Gastrocnemius medialis (tissue), 4 donors: ENCODE measurements at regions of chr18 and their contacts with region 1.

Region 1: DNA sequence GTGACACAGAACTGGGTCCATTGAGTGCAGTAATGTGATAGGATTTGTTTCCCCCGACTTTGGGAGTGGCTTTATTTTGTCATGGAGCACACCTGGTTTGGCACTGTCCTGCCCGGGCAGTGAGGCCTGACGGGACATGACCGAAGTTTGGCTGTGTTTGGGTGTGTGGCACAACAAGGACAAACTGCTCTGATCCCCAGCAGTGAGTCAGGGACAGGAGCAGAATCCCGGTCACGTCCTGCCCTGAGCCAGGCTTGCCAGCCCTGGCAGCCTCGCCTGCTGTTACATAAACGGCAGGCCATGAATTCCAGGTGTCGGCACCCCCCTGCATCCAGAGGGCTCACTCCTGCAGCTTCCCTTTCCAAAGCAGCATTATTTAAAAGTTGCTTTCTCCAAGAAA is 45.7 kb downstream of the IMPA2 start:
- DNase-seq: peak; percentile 88 to 89
- ATAC-seq: peak; percentile 97
- H3K4me3 ChIP-seq: no peak overlapping the region
- H3K27ac ChIP-seq: peak overlapping the region; percentile 83 to 90 (median 87)
- H3K4me1 ChIP-seq: peaks cover 22 to 29% of the 10 kb centered on the region in 2 donors
- H3K27me3 ChIP-seq: no peaks in the 10 kb centered on the region
- CTCF ChIP-seq: no peak
- POLR2A ChIP-seq: no peak

Region 2: DNA sequence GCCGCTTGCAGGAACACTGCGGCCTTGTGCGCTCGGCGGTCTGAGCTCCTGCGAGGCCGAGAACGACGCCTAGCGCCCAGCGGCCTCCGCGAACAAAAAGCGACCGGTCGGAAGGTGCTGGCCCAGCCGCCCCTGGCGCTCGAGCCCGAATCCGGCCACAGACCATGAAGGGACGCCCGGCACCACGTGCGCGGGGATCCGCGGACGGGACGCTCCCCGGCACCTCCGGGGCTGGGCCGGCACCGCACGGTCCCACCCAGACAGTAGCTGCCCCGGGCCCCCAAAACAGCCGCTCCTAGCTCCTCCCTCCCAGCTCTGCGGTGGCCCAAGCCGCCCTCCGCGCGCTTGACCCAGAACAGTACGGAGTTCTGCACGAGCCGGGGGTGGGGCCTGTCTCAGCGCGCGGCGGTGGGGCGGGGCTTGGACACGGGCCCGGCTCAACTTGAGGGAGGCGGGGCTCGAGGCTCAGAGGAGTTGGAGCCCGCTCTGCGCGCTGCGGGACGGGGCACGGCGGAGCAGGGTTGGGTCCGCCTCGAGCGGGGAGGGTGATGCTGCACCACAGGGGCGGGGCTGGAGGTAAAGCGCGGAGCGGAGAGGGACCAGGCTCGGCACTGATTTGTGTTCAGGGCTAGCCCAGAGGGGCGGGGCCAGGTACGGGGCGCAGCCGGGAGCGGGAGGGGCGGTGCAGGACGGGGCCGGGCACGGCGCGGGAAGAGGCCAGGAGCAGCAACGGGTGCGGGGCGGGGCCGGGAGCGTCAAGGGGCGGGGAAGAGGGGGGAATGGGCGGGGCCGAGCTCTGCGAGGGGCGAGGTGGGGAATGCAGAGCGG is 46.3 kb before region 1 on chr18:
- in situ Hi-C with region 1: no loop called
- intact Hi-C with region 1: loop called (anchors 5 kb)
- DNase-seq: peak; percentile 99
- ATAC-seq: peak; percentile 67 to 72
- H3K4me3 ChIP-seq: peak overlapping the region; percentile 71 to 94 (median 86)
- H3K27ac ChIP-seq: peak overlapping the region; percentile 97 to 100 (median 99)
- H3K4me1 ChIP-seq: peaks cover 21 to 38% of the 10 kb centered on the region in 2 donors
- H3K27me3 ChIP-seq: no peaks in the 10 kb centered on the region
- CTCF ChIP-seq: peak in 4 of 5 experiments; percentile 14 to 41 (median 21)
- POLR2A ChIP-seq: peak; percentile 98 to 99

Region 3: GRCh38 chr18:11991021-11991795 is 35.8 kb before region 1 on chr18:
- in situ Hi-C with region 1: no loop called
- intact Hi-C with region 1: no loop called
- DNase-seq: no peak
- ATAC-seq: peak in 1 of 2 donors; percentile 8
- H3K4me3 ChIP-seq: no peak overlapping the region
- H3K27ac ChIP-seq: peak overlapping the region; percentile 97 to 100 (median 99)
- H3K4me1 ChIP-seq: peaks cover 91 to 93% of the 10 kb centered on the region in 2 donors
- H3K27me3 ChIP-seq: no peaks in the 10 kb centered on the region
- CTCF ChIP-seq: no peak
- POLR2A ChIP-seq: peak; percentile 38 to 55

Region 4: DNA sequence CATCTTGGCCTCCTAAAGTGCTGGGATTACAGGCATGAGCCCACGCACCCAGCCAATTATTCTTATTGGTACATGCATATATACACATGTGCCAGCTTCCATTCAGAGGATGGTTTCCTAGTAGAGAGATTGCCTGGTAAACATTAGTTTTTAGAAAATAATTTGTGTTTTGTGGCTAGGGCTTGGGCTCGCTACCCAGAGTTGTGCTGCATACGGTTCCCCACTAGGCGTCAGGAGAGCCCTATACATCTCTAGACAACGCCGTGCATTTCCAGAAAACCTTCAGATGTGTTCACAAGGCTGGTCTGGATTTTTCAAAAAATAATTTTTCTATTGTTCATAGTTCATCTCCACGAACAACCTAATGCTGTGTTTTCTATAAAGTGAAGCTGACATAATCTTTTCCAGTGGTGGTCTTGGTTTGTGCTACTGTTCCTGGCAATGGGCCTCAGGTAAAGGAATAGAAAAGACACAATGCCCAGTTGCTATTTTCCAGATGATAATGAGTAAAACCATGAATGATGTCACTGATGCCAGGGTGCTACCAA is 364.6 kb after region 1 on chr18:
- in situ Hi-C with region 1: no loop called
- intact Hi-C with region 1: no loop called
- DNase-seq: peak; percentile 33 to 34
- ATAC-seq: peak; percentile 90 to 91
- H3K4me3 ChIP-seq: no peak overlapping the region
- H3K27ac ChIP-seq: no peak overlapping the region
- H3K4me1 ChIP-seq: no peaks in the 10 kb centered on the region
- H3K27me3 ChIP-seq: no peaks in the 10 kb centered on the region
- CTCF ChIP-seq: peak; percentile 72 to 91 (median 86)
- POLR2A ChIP-seq: no peak